GM12878 (cell line): ENCODE measurements at regions of chr3 and their contacts with region 1.

Region 1: DNA sequence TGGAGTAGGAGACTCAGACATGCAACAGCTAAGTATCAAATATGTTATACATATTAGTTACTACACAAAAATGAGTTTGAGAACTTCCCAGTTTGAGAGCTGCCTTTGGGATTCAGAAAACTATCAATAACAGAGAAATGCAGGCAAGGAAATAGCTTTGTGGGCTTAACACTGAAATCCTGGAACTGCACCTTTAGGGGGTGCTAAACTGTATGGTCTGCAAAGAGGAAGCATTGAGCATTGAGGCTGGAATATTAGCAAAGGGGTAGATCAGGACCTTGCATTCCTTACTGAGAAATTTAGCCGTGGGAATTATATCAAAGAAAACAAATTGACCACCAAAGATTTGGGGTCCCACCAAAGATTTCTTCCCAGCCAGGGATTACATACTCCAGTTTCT is 580.0 kb downstream of the ZNF385D start:
- DNase-seq: no peak
- ATAC-seq: peak; percentile 71
- H3K4me3 ChIP-seq: no peak overlapping the region
- H3K27ac ChIP-seq: no peak overlapping the region
- H3K4me1 ChIP-seq: no peaks in the 10 kb centered on the region
- H3K27me3 ChIP-seq: no peaks in the 10 kb centered on the region
- CTCF ChIP-seq: peak; percentile 31 to 48 (median 43)
- EP300 ChIP-seq: no peak
- POLR2A ChIP-seq: no peak
- RAD21 ChIP-seq: no peak

Region 2: GRCh38 chr3:21158861-21159542 is 12.0 kb before region 1 on chr3:
- CTCF ChIA-PET with region 1: interaction called, 23 read pairs
- POLR2A ChIA-PET with region 1: no interaction called
- RAD21 ChIA-PET with region 1: interaction called, 5 read pairs
- SMC1A ChIA-PET with region 1: interaction called, 3 read pairs
- in situ Hi-C with region 1: no loop called
- intact Hi-C with region 1: no loop called
- DNase-seq: no peak
- ATAC-seq: no peak
- H3K4me3 ChIP-seq: no peak overlapping the region
- H3K27ac ChIP-seq: no peak overlapping the region
- H3K4me1 ChIP-seq: no peaks in the 10 kb centered on the region
- H3K27me3 ChIP-seq: no peaks in the 10 kb centered on the region
- CTCF ChIP-seq: no peak
- EP300 ChIP-seq: no peak
- POLR2A ChIP-seq: no peak
- RAD21 ChIP-seq: no peak

Region 3: GRCh38 chr3:21484057-21484827 is 313.3 kb after region 1 on chr3:
- CTCF ChIA-PET with region 1: interaction called, 22 read pairs
- POLR2A ChIA-PET with region 1: no interaction called
- RAD21 ChIA-PET with region 1: interaction called, 7 read pairs
- SMC1A ChIA-PET with region 1: interaction called, 9 read pairs
- in situ Hi-C with region 1: no loop called
- intact Hi-C with region 1: no loop called
- DNase-seq: peak; percentile 4
- ATAC-seq: peak; percentile 96
- H3K4me3 ChIP-seq: no peak overlapping the region
- H3K27ac ChIP-seq: no peak overlapping the region
- H3K4me1 ChIP-seq: no peaks in the 10 kb centered on the region
- H3K27me3 ChIP-seq: no peaks in the 10 kb centered on the region
- CTCF ChIP-seq: peak; percentile 62 to 69 (median 67)
- EP300 ChIP-seq: no peak
- POLR2A ChIP-seq: no peak
- RAD21 ChIP-seq: peak; percentile 69